ENCODE measurements at regions of chr2 and their contacts with region 1.

Region 1: GRCh38 chr2:101419096-101419663 is 31.9 kb upstream of the CREG2 start:
- DNase-seq: peak; percentile 67 to 81 (median 73)
- H3K4me3 ChIP-seq: no peak overlapping the region
- H3K27ac ChIP-seq: no peak overlapping the region
- H3K4me1 ChIP-seq: no peaks in the 10 kb centered on the region
- H3K27me3 ChIP-seq: no peaks in the 10 kb centered on the region

Region 2: GRCh38 chr2:101405351-101405899 is 13.8 kb before region 1 on chr2:
- CTCF ChIA-PET with region 1: interaction called, 17 read pairs
- POLR2A ChIA-PET with region 1: no interaction called
- DNase-seq: peak in 2 of 3 donors; percentile 69 to 78
- H3K4me3 ChIP-seq: no peak overlapping the region
- H3K27ac ChIP-seq: no peak overlapping the region
- H3K4me1 ChIP-seq: peaks cover 19 to 55% (median 42%) of the 10 kb centered on the region in 4 experiments
- H3K27me3 ChIP-seq: no peaks in the 10 kb centered on the region

Region 3: DNA sequence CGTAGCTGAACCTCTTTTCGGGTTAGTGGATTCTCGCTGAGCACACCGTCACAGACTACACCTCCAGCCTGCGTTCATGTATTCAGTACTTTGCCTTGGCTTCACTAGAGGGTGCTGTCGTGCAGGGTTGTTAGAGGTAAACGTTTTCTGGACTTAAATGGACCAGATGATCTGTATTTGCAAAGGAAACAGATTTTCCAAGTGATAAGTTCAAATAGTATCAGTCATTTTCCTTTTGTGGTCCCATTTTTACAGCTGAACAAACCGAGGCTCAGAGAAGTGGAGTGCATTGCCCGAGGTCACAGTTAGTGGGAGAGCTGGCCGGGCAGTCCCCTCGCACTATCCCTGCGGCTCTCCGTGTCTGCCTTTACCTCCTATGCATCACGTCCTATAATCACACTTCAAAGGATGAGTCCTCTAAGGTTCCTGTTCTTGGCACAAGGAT is 404.2 kb after region 1 on chr2:
- CTCF ChIA-PET with region 1: interaction called, 28 read pairs
- POLR2A ChIA-PET with region 1: no interaction called
- DNase-seq: peak; percentile 75 to 92 (median 89)
- H3K4me3 ChIP-seq: peak overlapping the region in 2 of 7 experiments; percentile 13 to 50
- H3K27ac ChIP-seq: no peak overlapping the region
- H3K4me1 ChIP-seq: peaks cover 3 to 26% (median 12%) of the 10 kb centered on the region in 4 experiments
- H3K27me3 ChIP-seq: no peaks in the 10 kb centered on the region

Region 4: GRCh38 chr2:101831351-101831865 is 412.2 kb after region 1 on chr2:
- CTCF ChIA-PET with region 1: interaction called, 43 read pairs
- POLR2A ChIA-PET with region 1: no interaction called
- DNase-seq: peak; percentile 61 to 78 (median 77)
- H3K4me3 ChIP-seq: no peak overlapping the region
- H3K27ac ChIP-seq: no peak overlapping the region
- H3K4me1 ChIP-seq: peaks cover 0 to 28% (median 5%) of the 10 kb centered on the region in 4 experiments
- H3K27me3 ChIP-seq: no peaks in the 10 kb centered on the region

Region 5: DNA sequence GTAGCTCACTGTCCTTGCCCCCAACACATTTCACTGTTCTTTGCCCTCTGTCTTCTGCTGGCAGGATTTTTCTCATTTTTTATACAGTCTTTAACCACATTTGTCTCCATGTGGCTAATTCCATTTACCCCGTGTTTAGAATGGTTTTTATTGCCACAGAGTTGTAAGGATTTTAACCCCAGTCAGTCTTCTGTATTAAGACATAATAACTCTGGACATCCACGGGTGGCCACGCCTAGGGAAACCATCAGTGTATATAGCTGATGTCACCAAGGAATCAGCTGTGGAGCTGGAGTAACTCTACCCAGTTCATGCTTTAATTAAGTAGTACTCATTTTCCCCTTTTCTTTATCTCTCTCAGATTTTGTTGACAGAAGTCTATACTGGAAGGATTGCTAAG is 418.2 kb after region 1 on chr2:
- CTCF ChIA-PET with region 1: interaction called, 43 read pairs
- POLR2A ChIA-PET with region 1: no interaction called
- DNase-seq: no peak
- H3K4me3 ChIP-seq: no peak overlapping the region
- H3K27ac ChIP-seq: no peak overlapping the region
- H3K4me1 ChIP-seq: peaks cover 0 to 9% (median 4%) of the 10 kb centered on the region in 4 experiments
- H3K27me3 ChIP-seq: no peaks in the 10 kb centered on the region

Measured in common myeloid progenitor, CD34-positive (primary cell).